HCT116 (cell line): ENCODE measurements at regions of chr17 and their contacts with region 1.

Region 1: GRCh38 chr17:76506408-76507349 is 5.5 kb upstream of the RHBDF2 start:
- DNase-seq: peak; percentile 60
- ATAC-seq: peak; percentile 84
- H3K4me3 ChIP-seq: no peak overlapping the region
- H3K27ac ChIP-seq: no peak overlapping the region; the same call in 1 of the 2 replicates
- H3K4me1 ChIP-seq: peaks cover 8 to 27% of the 10 kb centered on the region in 2 experiments
- H3K27me3 ChIP-seq: no peaks in the 10 kb centered on the region
- CTCF ChIP-seq: peak; percentile 94 to 99 (median 98)
- POLR2A ChIP-seq: no peak
- RAD21 ChIP-seq: peak; percentile 100

Region 2: GRCh38 chr17:76408052-76408849 is 98.4 kb before region 1 on chr17:
- CTCF ChIA-PET with region 1: interaction called, 8 read pairs
- POLR2A ChIA-PET with region 1: interaction called, 4 read pairs
- RAD21 ChIA-PET with region 1: no interaction called
- intact Hi-C with region 1: loop called (anchors 1 kb)
- DNase-seq: peak; percentile 42
- ATAC-seq: peak; percentile 92
- H3K4me3 ChIP-seq: no peak overlapping the region
- H3K27ac ChIP-seq: no peak overlapping the region
- H3K4me1 ChIP-seq: peaks cover 0 to 5% of the 10 kb centered on the region in 2 experiments; a peak in 2 of 4 replicates
- H3K27me3 ChIP-seq: no peaks in the 10 kb centered on the region
- CTCF ChIP-seq: peak; percentile 94 to 100 (median 100)
- POLR2A ChIP-seq: no peak
- RAD21 ChIP-seq: peak; percentile 93

Region 3: DNA sequence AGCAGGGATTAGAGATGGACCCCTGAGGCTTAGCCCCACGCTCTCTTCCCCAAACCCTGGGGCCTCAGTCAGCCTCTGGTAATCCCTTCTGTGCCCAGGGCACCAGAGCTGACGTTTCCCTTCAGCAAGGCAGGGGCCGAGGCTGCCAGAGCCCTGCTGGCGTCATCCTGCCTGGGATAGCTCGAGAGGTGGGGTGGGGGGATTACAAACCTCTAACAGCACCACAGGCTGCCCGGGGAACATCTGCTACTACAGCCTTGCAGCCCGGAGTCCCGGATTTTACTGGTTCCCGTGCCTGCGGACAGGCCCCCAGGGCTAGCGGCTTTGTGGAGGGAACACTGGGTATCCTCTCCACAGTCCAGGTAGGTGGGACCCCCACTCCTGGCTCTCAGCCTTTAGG is 39.3 kb before region 1 on chr17 and contains the start of gene AANAT:
- CTCF ChIA-PET with region 1: interaction called, 100 read pairs
- POLR2A ChIA-PET with region 1: interaction called, 3 read pairs
- RAD21 ChIA-PET with region 1: interaction called, 3 to 4 read pairs
- intact Hi-C with region 1: loop called (anchors 1 kb)
- DNase-seq: no peak
- ATAC-seq: no peak
- H3K4me3 ChIP-seq: no peak within 1 kb of the TSS
- H3K27ac ChIP-seq: no peak within 1 kb of the TSS; the same call in 1 of the 2 replicates
- H3K4me1 ChIP-seq: peaks cover 0 to 10% of the 10 kb centered on the region in 2 experiments; a peak in 2 of 4 replicates
- H3K27me3 ChIP-seq: no peaks in the 10 kb centered on the region
- CTCF ChIP-seq: no peak
- POLR2A ChIP-seq: no peak
- RAD21 ChIP-seq: no peak
- total RNA-seq, gene AANAT: not detected